ENCODE measurements at regions of chr3 and their contacts with region 1.

Region 1: GRCh38 chr3:5122030-5122740 is at the start of gene ARL8B:
- DNase-seq: peak; percentile 95
- H3K4me3 Mint-ChIP-seq: peak within 1 kb of the TSS; percentile 85
- H3K27ac Mint-ChIP-seq: peak within 1 kb of the TSS; percentile 92
- H3K4me1 Mint-ChIP-seq: peaks cover 41% of the 10 kb centered on the region
- H3K27me3 Mint-ChIP-seq: no peaks in the 10 kb centered on the region
- total RNA-seq, gene ARL8B: 55.4 to 58.5 TPM

Region 2: GRCh38 chr3:4303187-4304123 is 818.7 kb before region 1 on chr3 and contains the start of gene SETMAR:
- CTCF ChIA-PET with region 1: no interaction called
- POLR2A ChIA-PET with region 1: no interaction called
- intact Hi-C with region 1: loop called (anchors 1 kb)
- DNase-seq: peak; percentile 91
- H3K4me3 Mint-ChIP-seq: peak within 1 kb of the TSS; percentile 93
- H3K27ac Mint-ChIP-seq: peak within 1 kb of the TSS; percentile 96
- H3K4me1 Mint-ChIP-seq: peaks cover 23% of the 10 kb centered on the region
- H3K27me3 Mint-ChIP-seq: no peaks in the 10 kb centered on the region
- total RNA-seq, gene SETMAR: 11.7 to 13.8 TPM

Region 3: DNA sequence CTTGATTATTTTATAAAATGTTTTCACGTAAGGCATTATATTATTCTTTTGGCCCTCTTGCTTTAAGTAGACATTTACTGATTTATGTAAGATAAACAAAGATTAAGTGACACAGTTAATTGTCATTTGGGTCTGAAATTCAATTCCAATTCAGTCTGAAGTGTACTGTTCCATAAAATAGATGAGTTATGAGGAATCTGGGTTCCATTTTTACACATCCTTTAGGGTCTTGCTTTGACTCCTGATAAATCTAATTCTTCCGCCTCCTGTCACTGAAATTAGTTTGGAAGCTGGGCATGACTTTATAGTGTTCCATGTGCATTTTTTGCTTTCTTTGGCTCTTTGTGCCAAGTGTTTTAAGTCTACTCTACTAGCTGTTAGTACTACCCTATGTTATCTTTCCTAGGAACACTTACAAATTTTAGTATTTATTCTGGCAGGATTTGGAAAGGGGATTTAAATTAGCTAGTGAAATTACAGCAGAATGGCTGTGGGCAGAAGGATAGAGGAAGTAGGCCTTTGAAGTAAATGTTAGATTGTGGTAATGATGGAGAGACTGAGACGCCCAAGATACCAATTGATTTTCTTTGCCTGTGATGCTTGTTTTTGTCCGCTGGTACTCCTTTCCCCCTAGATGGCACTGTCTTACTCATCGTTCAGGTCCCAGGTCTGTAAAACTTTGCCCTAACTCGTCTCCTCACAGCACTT is 14.2 kb after region 1 on chr3:
- CTCF ChIA-PET with region 1: interaction called, 15 read pairs
- POLR2A ChIA-PET with region 1: interaction called, 3 read pairs
- intact Hi-C with region 1: loop called (anchors 1 kb)
- DNase-seq: peak; percentile 31
- H3K4me3 Mint-ChIP-seq: no peak overlapping the region
- H3K27ac Mint-ChIP-seq: peak overlapping the region; percentile 72
- H3K4me1 Mint-ChIP-seq: peaks cover 69% of the 10 kb centered on the region
- H3K27me3 Mint-ChIP-seq: no peaks in the 10 kb centered on the region

Region 4: GRCh38 chr3:5187156-5187919 is 65.2 kb after region 1 on chr3 and contains the start of gene EDEM1:
- CTCF ChIA-PET with region 1: interaction called, 14 read pairs
- POLR2A ChIA-PET with region 1: interaction called, 119 read pairs
- intact Hi-C with region 1: loop called (anchors 1 kb)
- DNase-seq: peak; percentile 98
- H3K4me3 Mint-ChIP-seq: peak within 1 kb of the TSS; percentile 96
- H3K27ac Mint-ChIP-seq: peak within 1 kb of the TSS; percentile 98
- H3K4me1 Mint-ChIP-seq: peaks cover 27% of the 10 kb centered on the region
- H3K27me3 Mint-ChIP-seq: no peaks in the 10 kb centered on the region
- total RNA-seq, gene EDEM1: 192 to 203 TPM

Region 5: GRCh38 chr3:5330152-5330810 is 208.1 kb after region 1 on chr3:
- CTCF ChIA-PET with region 1: no interaction called
- POLR2A ChIA-PET with region 1: no interaction called
- intact Hi-C with region 1: loop called (anchors 1 kb)
- DNase-seq: peak; percentile 65
- H3K4me3 Mint-ChIP-seq: peak overlapping the region; percentile 36
- H3K27ac Mint-ChIP-seq: peak overlapping the region; percentile 59
- H3K4me1 Mint-ChIP-seq: peaks cover 32% of the 10 kb centered on the region
- H3K27me3 Mint-ChIP-seq: peaks cover 3% of the 10 kb centered on the region

Measured in activated CD4-positive, alpha-beta memory T cell treated with anti-CD3 and anti-CD28 coated beads for 36 hours (primary cell).